ENCODE measurements at regions of chr17 and their contacts with region 1.

Region 1: DNA sequence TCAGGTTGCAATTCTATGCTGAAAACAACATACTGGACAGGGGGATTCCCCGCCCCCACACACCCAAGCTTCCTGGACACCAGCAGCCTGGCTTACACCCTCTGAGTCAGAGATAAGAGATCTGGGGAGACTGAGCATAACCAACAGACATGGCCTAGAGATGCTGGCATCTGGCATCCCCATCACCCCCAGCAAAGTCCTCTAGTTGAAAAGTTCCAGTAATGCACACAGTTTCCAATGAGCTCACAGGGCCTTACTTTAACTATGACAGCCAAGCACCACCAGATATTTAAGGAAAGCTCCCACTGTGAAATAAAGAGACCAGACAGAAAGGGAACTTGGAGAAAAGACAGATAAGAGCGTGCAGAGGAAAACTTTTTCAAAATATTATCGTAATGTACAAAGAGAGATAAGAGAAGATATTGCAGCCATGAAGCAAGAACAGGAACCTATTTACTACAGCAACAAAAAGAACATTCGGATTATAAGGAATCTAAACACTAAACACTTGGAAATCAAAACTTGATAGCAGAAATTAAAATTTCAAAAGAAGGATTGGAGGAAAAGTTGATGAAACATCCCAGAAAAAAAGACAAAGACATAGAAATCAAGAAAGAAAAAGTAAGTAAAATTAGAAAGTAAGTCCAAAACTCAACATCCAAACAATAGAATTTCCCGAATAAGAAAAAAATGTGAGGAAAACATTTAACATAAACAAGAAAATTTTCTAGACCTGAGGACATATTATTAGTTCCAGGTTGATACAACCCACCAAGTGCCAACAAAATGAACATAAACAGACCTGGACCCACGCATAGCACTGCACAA is 17.2 kb upstream of the ALOX15 start:
- DNase-seq: peak; percentile 83
- H3K4me3 Mint-ChIP-seq: no peak overlapping the region
- H3K27ac Mint-ChIP-seq: no peak overlapping the region
- H3K4me1 Mint-ChIP-seq: peaks cover 12% of the 10 kb centered on the region
- H3K27me3 Mint-ChIP-seq: peaks cover 11% of the 10 kb centered on the region

Region 2: GRCh38 chr17:4366327-4367063 is 292.2 kb before region 1 on chr17 and contains the start of gene UBE2G1:
- CTCF ChIA-PET with region 1: no interaction called
- POLR2A ChIA-PET with region 1: no interaction called
- intact Hi-C with region 1: no loop called
- DNase-seq: peak; percentile 100
- H3K4me3 Mint-ChIP-seq: peak within 1 kb of the TSS; percentile 73
- H3K27ac Mint-ChIP-seq: peak within 1 kb of the TSS; percentile 91
- H3K4me1 Mint-ChIP-seq: peaks cover 33% of the 10 kb centered on the region
- H3K27me3 Mint-ChIP-seq: no peaks in the 10 kb centered on the region
- total RNA-seq, gene UBE2G1: 54.4 to 57.6 TPM

Region 3: GRCh38 chr17:4520894-4521600 is 137.6 kb before region 1 on chr17:
- CTCF ChIA-PET with region 1: no interaction called
- POLR2A ChIA-PET with region 1: no interaction called
- intact Hi-C with region 1: no loop called
- DNase-seq: no peak
- H3K4me3 Mint-ChIP-seq: no peak overlapping the region
- H3K27ac Mint-ChIP-seq: no peak overlapping the region
- H3K4me1 Mint-ChIP-seq: no peaks in the 10 kb centered on the region
- H3K27me3 Mint-ChIP-seq: peaks cover 2% of the 10 kb centered on the region

Region 4: GRCh38 chr17:4678427-4679026 is 19.8 kb after region 1 on chr17:
- CTCF ChIA-PET with region 1: no interaction called
- POLR2A ChIA-PET with region 1: no interaction called
- intact Hi-C with region 1: loop called (anchors 2 kb)
- DNase-seq: peak; percentile 71
- H3K4me3 Mint-ChIP-seq: no peak overlapping the region
- H3K27ac Mint-ChIP-seq: peak overlapping the region; percentile 49
- H3K4me1 Mint-ChIP-seq: peaks cover 11% of the 10 kb centered on the region
- H3K27me3 Mint-ChIP-seq: no peaks in the 10 kb centered on the region

Region 5: GRCh38 chr17:4696437-4696805 is 37.7 kb after region 1 on chr17:
- CTCF ChIA-PET with region 1: no interaction called
- POLR2A ChIA-PET with region 1: no interaction called
- intact Hi-C with region 1: loop called (anchors 5 kb)
- DNase-seq: peak; percentile 52
- H3K4me3 Mint-ChIP-seq: peak overlapping the region; percentile 21
- H3K27ac Mint-ChIP-seq: peak overlapping the region; percentile 88
- H3K4me1 Mint-ChIP-seq: peaks cover 55% of the 10 kb centered on the region
- H3K27me3 Mint-ChIP-seq: no peaks in the 10 kb centered on the region

Measured in activated CD4-positive, alpha-beta memory T cell treated with anti-CD3 and anti-CD28 coated beads for 36 hours (primary cell).